ENCODE measurements at regions of chr17 and their contacts with region 1.

Region 1: GRCh38 chr17:50026901-50027630 is 28.8 kb upstream of the ITGA3 start:
- DNase-seq: peak; percentile 57
- ATAC-seq: peak; percentile 91
- H3K4me3 ChIP-seq: no peak overlapping the region
- H3K27ac ChIP-seq: no peak overlapping the region
- H3K4me1 ChIP-seq: peaks cover 9% of the 10 kb centered on the region
- H3K27me3 ChIP-seq: peaks cover 0 to 7% of the 10 kb centered on the region in 2 experiments; a peak in 2 of 5 replicates
- CTCF ChIP-seq: peak; percentile 92
- EP300 ChIP-seq: no peak
- POLR2A ChIP-seq: no peak
- RAD21 ChIP-seq: peak; percentile 84

Region 2: DNA sequence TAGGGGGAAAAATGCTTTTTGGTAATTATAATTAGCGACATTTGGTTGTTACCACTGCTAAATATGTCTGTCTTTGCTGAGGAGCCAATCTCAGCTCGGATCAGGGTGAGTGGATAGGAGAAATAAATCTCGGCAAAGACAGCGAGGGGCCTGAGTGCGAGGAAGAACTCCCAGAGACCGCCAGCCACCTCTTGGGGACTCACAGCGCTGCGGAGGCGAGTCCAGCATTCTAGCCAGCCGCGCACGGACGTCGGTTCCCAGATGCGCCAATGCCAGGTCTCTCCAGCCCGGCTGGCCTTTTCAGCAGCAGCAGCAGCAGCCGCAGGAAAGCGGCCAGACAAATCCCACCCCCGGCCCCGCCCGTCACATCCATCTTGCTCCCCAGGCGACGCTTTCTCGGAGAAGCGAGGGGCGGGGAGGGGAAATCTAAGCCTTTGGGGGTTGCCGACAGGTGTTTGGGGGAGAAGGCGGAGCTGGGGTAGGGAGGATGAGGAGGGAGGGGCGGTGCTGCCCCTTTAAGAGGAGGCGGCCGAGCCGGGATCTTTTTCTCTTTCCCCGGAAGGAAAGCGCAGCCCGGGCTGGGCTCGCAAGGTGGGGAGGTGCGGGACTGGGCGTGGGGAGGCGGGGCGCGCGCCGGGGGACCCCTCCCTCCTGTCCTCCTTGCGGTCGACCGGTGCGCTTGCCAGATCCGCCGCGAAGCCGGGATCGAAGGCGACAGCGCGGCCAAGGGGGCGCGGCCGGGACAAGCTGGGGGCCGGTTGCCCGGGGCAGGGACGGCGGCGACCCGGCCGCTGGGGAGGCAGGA is 28.6 kb after region 1 on chr17 and contains the start of gene ITGA3:
- CTCF ChIA-PET with region 1: no interaction called
- POLR2A ChIA-PET with region 1: no interaction called
- in situ Hi-C with region 1: no loop called
- intact Hi-C with region 1: loop called (anchors 2 kb)
- DNase-seq: no peak
- ATAC-seq: peak; percentile 42
- H3K4me3 ChIP-seq: peak within 1 kb of the TSS; percentile 62 to 75 (median 63)
- H3K27ac ChIP-seq: no peak within 1 kb of the TSS
- H3K4me1 ChIP-seq: peaks cover 53% of the 10 kb centered on the region
- H3K27me3 ChIP-seq: peaks cover 10 to 85% of the 10 kb centered on the region in 2 experiments
- CTCF ChIP-seq: no peak
- EP300 ChIP-seq: no peak
- POLR2A ChIP-seq: no peak
- RAD21 ChIP-seq: no peak
- total RNA-seq, gene ITGA3: 0.69 and 0.77 TPM in 2 replicates

Region 3: GRCh38 chr17:50079334-50080095 is 52.4 kb after region 1 on chr17:
- CTCF ChIA-PET with region 1: interaction called, 16 read pairs
- POLR2A ChIA-PET with region 1: no interaction called
- in situ Hi-C with region 1: no loop called
- intact Hi-C with region 1: loop called (anchors 2 kb)
- DNase-seq: peak; percentile 75
- ATAC-seq: peak; percentile 92
- H3K4me3 ChIP-seq: no peak overlapping the region
- H3K27ac ChIP-seq: no peak overlapping the region
- H3K4me1 ChIP-seq: no peaks in the 10 kb centered on the region
- H3K27me3 ChIP-seq: peaks cover 0 to 13% of the 10 kb centered on the region in 2 experiments; a peak in 1 of 5 replicates
- CTCF ChIP-seq: peak; percentile 96
- EP300 ChIP-seq: no peak
- POLR2A ChIP-seq: no peak
- RAD21 ChIP-seq: peak; percentile 90

Region 4: GRCh38 chr17:50087246-50087911 is 60.3 kb after region 1 on chr17:
- CTCF ChIA-PET with region 1: interaction called, 71 read pairs
- POLR2A ChIA-PET with region 1: no interaction called
- in situ Hi-C with region 1: loop called (anchors 5 kb)
- intact Hi-C with region 1: loop called (anchors 1 kb)
- DNase-seq: peak; percentile 66
- ATAC-seq: peak; percentile 96
- H3K4me3 ChIP-seq: no peak overlapping the region
- H3K27ac ChIP-seq: no peak overlapping the region
- H3K4me1 ChIP-seq: no peaks in the 10 kb centered on the region
- H3K27me3 ChIP-seq: peaks cover 6 to 22% of the 10 kb centered on the region in 2 experiments; a peak in 4 of 5 replicates
- CTCF ChIP-seq: peak; percentile 100
- EP300 ChIP-seq: no peak
- POLR2A ChIP-seq: no peak
- RAD21 ChIP-seq: peak; percentile 94

Region 5: DNA sequence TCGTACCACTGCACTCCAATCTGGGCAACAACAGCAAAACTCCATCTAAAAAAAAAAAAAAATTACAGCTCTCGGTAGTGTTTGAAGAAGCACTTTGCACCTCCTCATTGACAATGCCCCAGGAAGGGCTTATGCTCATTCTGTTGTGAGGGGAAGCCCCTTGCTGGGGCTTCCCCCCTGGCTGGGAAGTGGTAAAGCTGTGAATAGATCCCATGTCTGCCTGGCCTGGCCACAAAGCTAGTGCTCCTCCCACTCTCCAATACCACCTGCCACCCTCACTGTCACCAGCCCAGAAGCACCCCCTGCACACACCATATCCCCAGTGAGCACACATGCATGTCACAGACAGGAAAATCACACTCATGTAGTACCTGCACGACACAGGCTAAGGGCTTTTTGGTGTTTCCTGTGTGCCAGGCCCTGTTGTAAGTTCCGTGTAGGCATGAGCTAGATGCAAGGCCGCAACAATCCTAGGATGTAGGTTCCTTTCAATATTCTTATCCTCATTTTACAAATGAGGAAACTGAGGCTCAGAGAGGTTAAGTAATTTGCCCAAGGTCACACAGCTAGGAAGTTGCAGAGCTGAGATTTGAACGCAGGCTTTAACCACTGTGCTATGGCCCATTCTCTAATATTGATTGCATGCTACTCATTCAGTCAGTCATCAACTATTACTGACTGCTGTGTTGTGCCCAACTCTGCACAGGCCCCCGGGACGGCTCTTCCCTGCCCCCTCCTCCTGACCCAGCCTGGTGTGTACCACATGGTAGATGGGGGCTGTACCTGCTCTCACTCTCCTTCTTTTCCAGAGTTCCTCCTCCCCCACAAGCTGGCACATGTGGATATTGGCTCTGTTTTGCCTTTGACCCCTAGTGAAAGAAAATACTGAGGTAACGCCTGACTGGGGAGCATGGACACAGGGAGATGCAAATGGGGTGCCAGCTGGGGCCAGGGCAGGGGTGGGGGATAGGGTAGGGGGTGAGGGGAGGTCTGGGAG is 186.3 kb after region 1 on chr17:
- CTCF ChIA-PET with region 1: no interaction called
- POLR2A ChIA-PET with region 1: no interaction called
- in situ Hi-C with region 1: no loop called
- intact Hi-C with region 1: no loop called
- DNase-seq: peak; percentile 73
- ATAC-seq: peak; percentile 54
- H3K4me3 ChIP-seq: no peak overlapping the region
- H3K27ac ChIP-seq: no peak overlapping the region
- H3K4me1 ChIP-seq: peaks cover 68% of the 10 kb centered on the region
- H3K27me3 ChIP-seq: peaks cover 0 to 32% of the 10 kb centered on the region in 2 experiments; a peak in 4 of 5 replicates
- CTCF ChIP-seq: peak; percentile 41
- EP300 ChIP-seq: no peak
- POLR2A ChIP-seq: no peak
- RAD21 ChIP-seq: no peak; the same call in 1 of the 2 replicates